ENCODE measurements at regions of chr7 and their contacts with region 1.

Region 1: DNA sequence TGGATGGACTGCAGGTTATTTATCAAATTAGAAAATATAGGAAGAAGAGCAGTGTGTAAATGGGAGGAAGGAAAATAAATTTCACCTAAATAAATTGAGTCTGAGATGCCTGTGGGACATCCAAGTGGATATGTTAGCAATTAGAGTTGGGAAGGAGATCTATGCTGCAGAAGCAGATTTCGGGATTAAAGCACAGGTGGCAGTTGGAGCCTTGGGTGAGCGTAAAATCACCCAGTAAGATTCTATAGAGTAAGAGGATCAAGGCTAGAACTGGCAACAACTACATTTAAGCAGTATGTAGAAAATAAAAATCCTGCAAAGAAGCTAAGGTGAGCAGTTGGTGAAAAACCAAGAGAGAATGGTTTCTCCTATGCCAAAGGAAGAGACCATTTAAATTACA is 8.4 kb downstream of the TRIM4 start:
- DNase-seq: no peak
- H3K4me3 Mint-ChIP-seq: no peak overlapping the region
- H3K27ac Mint-ChIP-seq: no peak overlapping the region
- H3K4me1 Mint-ChIP-seq: peaks cover 29% of the 10 kb centered on the region
- H3K27me3 Mint-ChIP-seq: no peaks in the 10 kb centered on the region

Region 2: DNA sequence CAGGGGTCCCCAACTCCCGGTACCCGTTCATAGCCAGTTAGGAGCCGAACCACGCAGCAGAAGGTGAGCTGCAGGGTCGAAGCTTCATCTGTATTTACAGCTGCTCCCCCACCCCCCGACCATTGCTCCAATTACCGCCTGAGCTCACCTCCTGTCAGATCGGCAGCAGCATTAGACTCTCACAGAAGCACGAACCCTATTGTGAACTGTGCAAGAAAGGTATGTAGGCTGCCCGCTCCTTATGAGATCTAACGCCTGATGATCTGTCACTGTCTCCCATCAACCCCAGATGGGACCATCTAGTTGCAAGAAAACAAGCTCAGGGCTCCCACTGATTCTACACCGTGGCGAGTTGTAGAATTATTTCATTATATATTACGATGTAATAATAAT is 79.5 kb after region 1 on chr7:
- intact Hi-C with region 1: loop called (anchors 1 kb)
- DNase-seq: no peak
- H3K4me3 Mint-ChIP-seq: no peak overlapping the region
- H3K27ac Mint-ChIP-seq: no peak overlapping the region
- H3K4me1 Mint-ChIP-seq: peaks cover 2% of the 10 kb centered on the region
- H3K27me3 Mint-ChIP-seq: peaks cover 13% of the 10 kb centered on the region

Region 3: DNA sequence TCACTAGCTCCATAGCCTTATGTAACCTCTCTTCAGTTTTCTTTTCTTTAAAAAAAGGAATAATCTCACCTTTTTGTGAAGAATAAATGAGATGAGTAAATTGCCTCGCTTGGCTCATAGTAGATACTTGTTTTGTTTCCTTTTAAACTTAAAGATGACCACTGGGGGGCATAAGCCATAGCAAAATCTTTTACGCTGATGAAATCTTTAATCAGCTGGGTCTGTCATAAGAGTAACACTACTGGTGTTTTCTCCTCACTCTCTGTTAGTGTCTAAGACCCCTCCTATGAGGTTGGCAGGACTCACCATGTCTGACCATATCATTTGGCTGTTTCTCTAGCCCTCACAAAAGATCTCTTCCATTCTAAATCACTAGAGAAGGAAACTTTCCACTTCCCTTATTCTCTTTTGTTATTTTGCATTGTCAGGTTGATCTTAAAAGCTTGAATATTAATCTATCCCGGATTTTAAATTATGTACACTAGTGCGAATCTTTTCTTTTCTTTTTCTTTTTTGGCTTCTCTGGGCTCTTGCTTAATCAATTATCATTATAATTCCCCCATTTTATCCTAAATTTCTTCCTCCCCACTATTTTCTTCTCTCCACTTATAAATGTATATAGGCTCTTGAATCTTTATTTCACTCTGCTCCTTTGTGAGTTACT is 279.2 kb after region 1 on chr7:
- intact Hi-C with region 1: no loop called
- DNase-seq: no peak
- H3K4me3 Mint-ChIP-seq: no peak overlapping the region
- H3K27ac Mint-ChIP-seq: no peak overlapping the region
- H3K4me1 Mint-ChIP-seq: peaks cover 12% of the 10 kb centered on the region
- H3K27me3 Mint-ChIP-seq: no peaks in the 10 kb centered on the region

Measured in activated CD4-positive, alpha-beta T cell treated with anti-CD3 and anti-CD28 coated beads, Interleukin-2, amount 10 ng/mL, durations not matched to agents 24 days and 14 days (primary cell).